Heart left ventricle (tissue), 16 donors: ENCODE measurements at regions of chr3 and their contacts with region 1.

Region 1: GRCh38 chr3:180594631-180595558 is 7.1 kb upstream of the TTC14 start:
- DNase-seq: no peak
- ATAC-seq: no peak
- H3K4me3 ChIP-seq: no peak overlapping the region
- H3K27ac ChIP-seq: no peak overlapping the region
- H3K4me1 ChIP-seq: no peaks in the 10 kb centered on the region
- H3K27me3 ChIP-seq: peaks cover 0 to 25% (median 3%) of the 10 kb centered on the region in 9 donors
- CTCF ChIP-seq: peak in 6 of 12 donors; percentile 2 to 37 (median 18)
- POLR2A ChIP-seq: no peak

Region 2: GRCh38 chr3:179811321-179812095 is 783.4 kb before region 1 on chr3:
- intact Hi-C with region 1: loop called in 4 of 10 experiments (anchors 5 to 10 kb)
- DNase-seq: peak in 1 of 5 donors; percentile 15
- ATAC-seq: peak in 3 of 4 donors; percentile 62 to 87 (median 77)
- H3K4me3 ChIP-seq: no peak overlapping the region
- H3K27ac ChIP-seq: no peak overlapping the region
- H3K4me1 ChIP-seq: peaks cover 0 to 7% (median 0%) of the 10 kb centered on the region in 12 donors
- H3K27me3 ChIP-seq: no peaks in the 10 kb centered on the region
- CTCF ChIP-seq: peak; percentile 30 to 74 (median 55)
- POLR2A ChIP-seq: no peak

Region 3: GRCh38 chr3:179929091-179929529 is 665.8 kb before region 1 on chr3:
- intact Hi-C with region 1: loop called in 2 of 10 experiments (anchors 10 kb)
- DNase-seq: peak in 1 of 5 donors; percentile 8
- ATAC-seq: no peak
- H3K4me3 ChIP-seq: no peak overlapping the region
- H3K27ac ChIP-seq: no peak overlapping the region
- H3K4me1 ChIP-seq: no peaks in the 10 kb centered on the region
- H3K27me3 ChIP-seq: peaks cover 0 to 8% (median 0%) of the 10 kb centered on the region in 9 donors
- CTCF ChIP-seq: peak; percentile 53 to 74 (median 60)
- POLR2A ChIP-seq: no peak

Region 4: GRCh38 chr3:181230258-181230657 is 635.4 kb after region 1 on chr3:
- intact Hi-C with region 1: no loop called
- DNase-seq: peak in 1 of 5 donors; percentile 18
- ATAC-seq: no peak
- H3K4me3 ChIP-seq: no peak overlapping the region
- H3K27ac ChIP-seq: no peak overlapping the region
- H3K4me1 ChIP-seq: no peaks in the 10 kb centered on the region
- H3K27me3 ChIP-seq: no peaks in the 10 kb centered on the region
- CTCF ChIP-seq: no peak
- POLR2A ChIP-seq: no peak